ENCODE measurements at regions of chr9 and their contacts with region 1.

Region 1: GRCh38 chr9:21527579-21527978 is 45.5 kb upstream of the IFNE start:
- DNase-seq: no peak
- H3K27ac ChIP-seq: peak overlapping the region; percentile 47
- CTCF ChIP-seq: no peak

Region 2: DNA sequence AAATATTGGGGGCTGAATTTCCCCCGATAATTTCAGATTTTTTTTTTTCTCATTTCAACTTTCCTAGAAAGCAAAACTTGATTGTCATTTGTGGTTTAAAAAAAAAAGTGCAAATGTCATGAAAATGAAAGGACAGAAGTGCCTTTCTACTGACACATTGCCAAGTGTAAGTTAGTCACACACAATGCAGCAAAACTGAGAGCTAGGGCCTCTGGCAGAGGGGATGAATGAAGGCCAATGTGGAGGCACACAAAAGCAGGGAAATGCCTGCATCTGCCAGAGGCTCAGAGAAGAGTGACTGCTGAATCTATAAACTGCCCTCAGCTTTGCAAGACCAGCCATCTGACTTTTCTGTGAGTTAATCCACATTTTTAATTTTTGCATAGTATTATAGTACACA is 215.7 kb before region 1 on chr9:
- CTCF ChIA-PET with region 1: interaction called, 10 read pairs
- POLR2A ChIA-PET with region 1: no interaction called
- DNase-seq: no peak
- H3K27ac ChIP-seq: no peak overlapping the region
- CTCF ChIP-seq: no peak

Measured in RWPE1 (cell line).